ENCODE measurements at regions of chr18 and their contacts with region 1.

Region 1: DNA sequence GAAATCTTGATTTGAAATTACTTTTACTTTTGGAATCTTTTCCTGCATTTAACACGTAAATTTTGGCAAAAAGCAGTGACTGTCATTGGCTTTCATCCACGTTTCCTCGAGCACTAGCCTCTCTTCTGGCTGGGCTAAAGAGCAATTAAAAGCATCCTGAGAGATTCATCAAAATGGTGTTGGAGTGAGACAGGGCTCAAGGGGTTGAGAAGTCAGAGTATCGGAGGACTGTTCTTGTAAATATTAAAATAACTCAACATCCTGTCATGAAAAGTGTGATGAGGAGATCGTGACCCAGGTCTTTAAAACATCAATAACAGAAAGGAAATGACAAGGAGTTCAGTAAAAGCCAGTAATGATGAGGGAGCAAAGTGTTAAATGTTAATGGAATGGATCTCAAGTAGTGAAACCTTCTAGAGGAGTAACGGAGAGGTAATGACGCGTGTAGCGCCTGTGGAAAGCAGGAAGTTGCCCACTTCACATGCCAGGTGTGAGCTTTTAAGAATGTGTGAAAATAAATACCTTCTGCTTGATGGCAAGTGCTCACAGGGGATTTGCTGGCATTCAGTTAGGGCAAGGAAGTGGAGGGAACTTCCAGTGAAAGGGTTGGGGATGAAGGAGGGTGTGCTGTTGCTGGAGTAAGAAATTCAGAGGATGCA is 754.4 kb downstream of the ADCYAP1 start:
- DNase-seq: no peak
- H3K27ac ChIP-seq: no peak overlapping the region
- CTCF ChIP-seq: no peak

Region 2: GRCh38 chr18:2263303-2263890 is 604.4 kb after region 1 on chr18:
- CTCF ChIA-PET with region 1: interaction called, 10 read pairs
- POLR2A ChIA-PET with region 1: no interaction called
- DNase-seq: no peak
- H3K27ac ChIP-seq: no peak overlapping the region
- CTCF ChIP-seq: no peak